Left ventricle myocardium inferior (tissue), 1 donor: ENCODE measurements at regions of chr22 and their contacts with region 1.

Region 1: GRCh38 chr22:43346521-43346929 is 3.4 kb upstream of the SCUBE1 start:
- DNase-seq: peak; percentile 67
- H3K4me3 ChIP-seq: no peak overlapping the region
- H3K27ac ChIP-seq: no peak overlapping the region
- H3K4me1 ChIP-seq: peaks cover 22% of the 10 kb centered on the region
- H3K27me3 ChIP-seq: peaks cover 99% of the 10 kb centered on the region
- CTCF ChIP-seq: peak; percentile 87

Region 2: DNA sequence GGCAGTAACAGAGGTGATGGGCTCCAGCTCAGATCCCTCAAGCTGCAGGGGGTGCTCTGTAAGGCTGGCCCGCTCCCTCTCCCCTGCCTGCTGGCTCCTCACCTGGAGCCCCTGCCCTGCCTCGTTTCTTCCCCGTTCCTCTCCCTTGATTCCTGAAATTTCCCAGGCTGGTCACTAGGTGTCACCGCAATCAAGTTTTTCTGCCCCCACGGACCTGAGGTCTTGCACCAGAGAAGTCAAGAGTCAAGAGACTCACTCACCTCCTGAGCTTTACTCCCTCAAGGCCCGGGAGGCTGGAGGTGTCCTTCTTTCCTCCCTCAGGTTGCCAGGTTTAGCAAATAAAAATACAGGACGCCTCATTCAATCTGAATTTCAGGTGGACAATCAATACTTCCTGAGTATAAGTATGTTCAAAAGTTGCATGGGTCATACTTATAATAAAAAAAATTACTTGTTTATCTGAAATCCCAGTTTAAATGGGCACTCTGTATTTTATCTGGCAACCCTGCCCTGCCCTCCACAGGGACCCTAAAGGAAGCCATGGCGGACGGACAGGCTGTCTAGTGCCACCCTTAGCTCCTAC is 72.5 kb before region 1 on chr22:
- intact Hi-C with region 1: loop called (anchors 2 kb)
- DNase-seq: no peak
- H3K4me3 ChIP-seq: no peak overlapping the region
- H3K27ac ChIP-seq: no peak overlapping the region
- H3K4me1 ChIP-seq: no peaks in the 10 kb centered on the region
- H3K27me3 ChIP-seq: peaks cover 67% of the 10 kb centered on the region
- CTCF ChIP-seq: peak; percentile 77